ENCODE measurements at regions of chr7 and their contacts with region 1.

Region 1: GRCh38 chr7:128361411-128362379 is at the start of gene PRRT4:
- DNase-seq: peak; percentile 73
- H3K4me3 ChIP-seq: peak within 1 kb of the TSS; percentile 54 to 63
- H3K27ac ChIP-seq: peak within 1 kb of the TSS in 1 of 2 experiments; percentile 100; a peak in 2 of 4 replicates
- H3K4me1 ChIP-seq: peaks cover 0 to 68% of the 10 kb centered on the region in 2 experiments; a peak in 2 of 4 replicates
- H3K27me3 ChIP-seq: peaks cover 46% of the 10 kb centered on the region
- CTCF ChIP-seq: no peak
- EP300 ChIP-seq: no peak
- RAD21 ChIP-seq: peak; percentile 58
- polyA plus RNA-seq, gene PRRT4: 1.5 and 3.4 TPM in 2 replicates

Region 2: GRCh38 chr7:128266883-128267607 is 94.7 kb before region 1 on chr7:
- CTCF ChIA-PET with region 1: no interaction called
- POLR2A ChIA-PET with region 1: interaction called, 10 read pairs
- DNase-seq: peak; percentile 90
- H3K4me3 ChIP-seq: peak overlapping the region; percentile 30 to 33; a peak in 3 of 4 replicates
- H3K27ac ChIP-seq: peak overlapping the region; percentile 54 to 99
- H3K4me1 ChIP-seq: peaks cover 18 to 41% of the 10 kb centered on the region in 2 experiments; a peak in 3 of 4 replicates
- H3K27me3 ChIP-seq: no peaks in the 10 kb centered on the region
- CTCF ChIP-seq: peak; percentile 34
- EP300 ChIP-seq: peak; percentile 8 to 77; a peak in 3 of 4 replicates
- RAD21 ChIP-seq: peak; percentile 41

Region 3: GRCh38 chr7:128349466-128349825 is 12.2 kb before region 1 on chr7:
- CTCF ChIA-PET with region 1: interaction called, 439 read pairs
- POLR2A ChIA-PET with region 1: interaction called, 37 read pairs
- DNase-seq: peak; percentile 66
- H3K4me3 ChIP-seq: no peak overlapping the region
- H3K27ac ChIP-seq: peak overlapping the region in 1 of 2 experiments; percentile 92; a peak in 2 of 4 replicates
- H3K4me1 ChIP-seq: peaks cover 0 to 43% of the 10 kb centered on the region in 2 experiments; a peak in 2 of 4 replicates
- H3K27me3 ChIP-seq: peaks cover 7% of the 10 kb centered on the region; the same call in 1 of the 2 replicates
- CTCF ChIP-seq: no peak
- EP300 ChIP-seq: peak in 1 of 2 experiments; percentile 44; a peak in 2 of 4 replicates
- RAD21 ChIP-seq: no peak

Region 4: DNA sequence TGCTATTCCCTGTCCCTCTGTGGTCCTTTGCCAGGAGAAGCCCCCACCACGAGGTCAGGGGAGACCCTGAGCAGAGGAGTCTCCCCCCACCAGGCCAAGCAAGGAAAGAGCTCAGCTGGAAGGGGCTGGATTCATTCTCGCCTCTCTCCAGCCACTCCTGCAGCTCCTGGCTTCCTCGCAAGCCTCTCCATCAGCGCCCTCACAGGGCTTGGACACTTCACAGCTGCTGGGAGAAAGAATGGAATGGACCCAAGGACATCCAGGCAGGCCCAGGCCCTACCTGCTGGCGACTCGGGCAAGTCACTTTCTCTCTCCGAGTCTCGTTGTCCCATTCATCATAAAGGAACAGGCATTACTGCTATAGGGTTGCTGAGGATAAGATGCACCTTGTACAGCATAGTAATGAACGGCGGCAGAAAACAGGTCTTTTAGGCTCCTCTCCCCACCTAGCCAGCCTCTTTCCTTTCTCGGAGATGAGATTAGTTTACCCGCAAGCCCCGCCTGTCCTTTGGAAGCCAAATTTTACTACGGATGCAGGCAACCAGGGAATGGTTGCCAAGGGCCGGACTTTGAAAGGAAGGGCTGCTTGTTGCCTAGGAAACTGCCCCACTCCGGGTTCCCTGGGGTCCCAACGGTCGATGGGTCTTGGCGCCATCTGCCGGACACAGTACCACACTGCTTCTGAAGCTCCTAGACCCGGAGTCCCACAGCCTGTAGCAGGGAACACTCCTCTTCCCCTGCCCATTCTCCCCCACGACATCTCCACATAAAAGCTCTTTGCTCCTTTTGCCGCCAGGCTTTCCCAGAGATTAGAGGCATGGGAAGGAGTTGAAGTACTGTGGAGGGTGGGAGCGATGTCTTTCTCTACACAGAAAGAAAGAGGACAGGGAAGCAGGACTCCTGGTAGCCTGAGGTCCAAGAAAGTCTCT is 25.8 kb after region 1 on chr7:
- CTCF ChIA-PET with region 1: interaction called, 493 read pairs
- POLR2A ChIA-PET with region 1: interaction called, 32 read pairs
- DNase-seq: peak; percentile 99
- H3K4me3 ChIP-seq: peak overlapping the region in 1 of 2 experiments; percentile 16; a peak in 2 of 4 replicates
- H3K27ac ChIP-seq: peak overlapping the region in 1 of 2 experiments; percentile 94; a peak in 2 of 4 replicates
- H3K4me1 ChIP-seq: peaks cover 0 to 41% of the 10 kb centered on the region in 2 experiments; a peak in 1 of 4 replicates
- H3K27me3 ChIP-seq: no peaks in the 10 kb centered on the region
- CTCF ChIP-seq: peak; percentile 98
- EP300 ChIP-seq: peak in 1 of 2 experiments; percentile 57; a peak in 2 of 4 replicates
- RAD21 ChIP-seq: peak; percentile 99

Region 5: GRCh38 chr7:128398016-128398840 is 36.5 kb after region 1 on chr7:
- CTCF ChIA-PET with region 1: interaction called, 21 read pairs
- POLR2A ChIA-PET with region 1: interaction called, 3 read pairs
- DNase-seq: peak; percentile 90
- H3K4me3 ChIP-seq: no peak overlapping the region; a peak in 1 of 4 replicates
- H3K27ac ChIP-seq: no peak overlapping the region
- H3K4me1 ChIP-seq: no peaks in the 10 kb centered on the region
- H3K27me3 ChIP-seq: no peaks in the 10 kb centered on the region
- CTCF ChIP-seq: peak; percentile 99
- EP300 ChIP-seq: no peak
- RAD21 ChIP-seq: peak; percentile 90

Measured in SK-N-SH (cell line).